ENCODE measurements at regions of chr4 and their contacts with region 1.

Region 1: DNA sequence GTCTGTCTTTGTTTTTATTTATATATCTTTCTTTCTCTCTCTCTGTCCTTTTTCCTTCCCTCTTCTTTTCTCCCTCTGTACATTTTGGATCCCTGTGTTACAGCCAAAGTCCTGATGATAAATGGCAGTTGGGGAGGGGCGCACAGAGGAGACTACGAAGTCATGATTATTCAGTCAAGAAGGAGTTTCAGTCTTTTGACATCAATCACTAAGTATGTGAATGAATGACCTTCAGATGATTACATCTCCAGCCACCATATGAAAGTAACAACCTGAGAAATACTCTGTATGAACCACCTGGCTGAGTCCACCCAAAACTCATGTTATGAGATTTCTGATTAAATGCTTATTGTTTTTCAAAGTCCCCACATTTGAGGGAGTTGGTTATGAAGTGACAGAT is 45.0 kb downstream of the UGT2B7 start:
- DNase-seq: no peak
- ATAC-seq: no peak
- H3K4me3 ChIP-seq: no peak overlapping the region
- H3K27ac ChIP-seq: no peak overlapping the region
- H3K4me1 ChIP-seq: no peaks in the 10 kb centered on the region
- H3K27me3 ChIP-seq: no peaks in the 10 kb centered on the region
- CTCF ChIP-seq: no peak

Region 2: GRCh38 chr4:69126024-69126423 is 15.3 kb before region 1 on chr4:
- CTCF ChIA-PET with region 1: no interaction called
- POLR2A ChIA-PET with region 1: interaction called, 10 read pairs
- in situ Hi-C with region 1: no loop called
- intact Hi-C with region 1: no loop called
- DNase-seq: no peak
- ATAC-seq: no peak
- H3K4me3 ChIP-seq: no peak overlapping the region
- H3K27ac ChIP-seq: no peak overlapping the region
- H3K4me1 ChIP-seq: no peaks in the 10 kb centered on the region
- H3K27me3 ChIP-seq: no peaks in the 10 kb centered on the region
- CTCF ChIP-seq: no peak

Measured in Panc1 (cell line).